GM12878 (cell line): ENCODE measurements at regions of chr12 and their contacts with region 1.

Region 1: GRCh38 chr12:52023182-52023975 is 16.6 kb downstream of the TAMALIN start:
- DNase-seq: no peak
- ATAC-seq: peak; percentile 72
- H3K4me3 ChIP-seq: peak overlapping the region; percentile 44; the same call in 1 of the 2 replicates
- H3K27ac ChIP-seq: no peak overlapping the region
- H3K4me1 ChIP-seq: peaks cover 21% of the 10 kb centered on the region
- H3K27me3 ChIP-seq: peaks cover 0 to 9% of the 10 kb centered on the region in 2 experiments; a peak in 2 of 4 replicates
- CTCF ChIP-seq: peak; percentile 91 to 97 (median 94); a peak in 5 of 6 replicates
- EP300 ChIP-seq: no peak
- POLR2A ChIP-seq: no peak
- RAD21 ChIP-seq: peak; percentile 65

Region 2: GRCh38 chr12:51579321-51579850 is 444.0 kb before region 1 on chr12:
- CTCF ChIA-PET with region 1: no interaction called
- POLR2A ChIA-PET with region 1: no interaction called
- RAD21 ChIA-PET with region 1: no interaction called
- SMC1A ChIA-PET with region 1: no interaction called
- in situ Hi-C with region 1: no loop called
- intact Hi-C with region 1: no loop called
- DNase-seq: no peak
- ATAC-seq: no peak
- H3K4me3 ChIP-seq: no peak overlapping the region
- H3K27ac ChIP-seq: no peak overlapping the region
- H3K4me1 ChIP-seq: no peaks in the 10 kb centered on the region
- H3K27me3 ChIP-seq: peaks cover 0 to 2% of the 10 kb centered on the region in 2 experiments; a peak in 2 of 4 replicates
- CTCF ChIP-seq: no peak
- EP300 ChIP-seq: no peak
- POLR2A ChIP-seq: no peak
- RAD21 ChIP-seq: no peak

Region 3: DNA sequence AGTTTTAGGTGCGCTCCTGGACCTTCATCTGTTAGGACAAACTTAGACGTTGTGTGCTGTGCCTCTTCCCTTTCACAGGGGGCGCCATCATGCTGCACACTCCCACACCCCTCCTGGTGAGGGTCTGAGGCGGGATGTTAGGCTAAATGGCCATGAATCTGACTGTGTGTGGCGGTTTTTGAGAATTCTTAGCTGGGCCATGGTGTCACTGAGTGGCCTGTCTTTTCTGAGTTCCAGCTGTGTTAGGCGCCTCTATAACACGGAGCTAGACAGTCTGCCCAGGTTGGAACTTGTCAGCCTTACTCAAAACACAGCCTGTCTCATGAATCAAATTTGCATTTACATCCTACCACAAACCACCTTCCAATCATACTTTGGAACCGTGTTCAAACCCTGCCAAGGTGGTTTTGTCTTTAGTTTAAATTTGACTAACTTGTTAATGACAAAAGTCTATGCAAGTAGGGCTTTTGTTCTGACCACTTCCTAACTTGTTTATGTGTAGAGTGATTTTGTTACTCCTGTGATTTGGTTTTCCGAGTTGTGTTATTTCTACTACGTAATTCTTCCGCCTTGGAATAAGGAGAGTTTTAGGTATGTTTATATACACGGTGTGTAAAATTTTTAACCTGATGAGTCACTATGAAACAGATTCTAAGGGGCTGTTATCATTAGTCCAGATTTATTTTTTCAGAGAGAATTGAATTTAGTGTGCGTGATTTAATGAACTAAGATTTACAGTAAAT is 52.3 kb before region 1 on chr12:
- CTCF ChIA-PET with region 1: interaction called, 12 read pairs
- POLR2A ChIA-PET with region 1: interaction called, 4 read pairs
- RAD21 ChIA-PET with region 1: interaction called, 10 read pairs
- SMC1A ChIA-PET with region 1: interaction called, 6 read pairs
- in situ Hi-C with region 1: no loop called
- intact Hi-C with region 1: no loop called
- DNase-seq: peak; percentile 93
- ATAC-seq: peak; percentile 97
- H3K4me3 ChIP-seq: no peak overlapping the region
- H3K27ac ChIP-seq: no peak overlapping the region
- H3K4me1 ChIP-seq: peaks cover 30% of the 10 kb centered on the region
- H3K27me3 ChIP-seq: peaks cover 0 to 8% of the 10 kb centered on the region in 2 experiments; a peak in 3 of 4 replicates
- CTCF ChIP-seq: peak; percentile 47 to 64 (median 60)
- EP300 ChIP-seq: peak; percentile 81 to 87; a peak in 3 of 4 replicates
- POLR2A ChIP-seq: no peak
- RAD21 ChIP-seq: 0 out of 2 replicates have a peak, but pooled peaks have one; percentile 8

Region 4: DNA sequence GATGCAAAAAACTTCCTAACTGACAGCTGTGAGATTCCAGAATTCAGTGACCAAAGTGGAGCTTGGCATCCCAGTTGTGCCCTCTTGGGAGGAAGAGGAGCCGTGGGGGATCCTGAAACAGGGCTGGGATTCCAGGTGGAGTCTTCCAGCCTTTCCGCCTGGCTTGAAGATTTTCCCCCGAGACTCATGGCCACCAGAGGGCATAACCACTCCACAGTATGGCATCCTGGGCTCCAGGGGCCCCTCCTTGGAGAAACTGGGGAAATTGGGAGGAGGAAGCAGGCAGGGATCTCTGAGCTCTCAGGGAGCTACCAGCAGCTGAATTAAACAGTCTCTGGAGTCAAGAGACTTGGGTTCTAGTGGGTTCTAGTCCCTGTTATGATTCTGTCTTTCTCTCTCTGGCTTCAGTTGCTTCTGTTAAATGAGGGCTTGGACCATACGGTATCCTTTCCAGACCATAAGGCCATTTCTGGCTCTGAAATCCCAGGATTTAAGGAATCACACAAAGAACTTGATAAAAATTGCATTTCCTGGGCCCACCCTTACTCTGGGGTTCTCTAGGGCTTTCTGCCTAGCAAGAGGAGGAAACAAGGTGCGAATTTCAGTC is 19.2 kb before region 1 on chr12:
- CTCF ChIA-PET with region 1: interaction called, 412 read pairs
- POLR2A ChIA-PET with region 1: interaction called, 4 read pairs
- RAD21 ChIA-PET with region 1: interaction called, 131 read pairs
- SMC1A ChIA-PET with region 1: interaction called, 92 read pairs
- in situ Hi-C with region 1: no loop called
- intact Hi-C with region 1: loop called (anchors 1 kb)
- DNase-seq: no peak
- ATAC-seq: no peak
- H3K4me3 ChIP-seq: no peak overlapping the region
- H3K27ac ChIP-seq: no peak overlapping the region
- H3K4me1 ChIP-seq: peaks cover 11% of the 10 kb centered on the region
- H3K27me3 ChIP-seq: peaks cover 9 to 21% of the 10 kb centered on the region in 2 experiments; a peak in 3 of 4 replicates
- CTCF ChIP-seq: peak; percentile 37 to 68 (median 59); a peak in 5 of 6 replicates
- EP300 ChIP-seq: no peak
- POLR2A ChIP-seq: no peak
- RAD21 ChIP-seq: peak; percentile 56

Region 5: GRCh38 chr12:52050761-52051541 is 27.6 kb after region 1 on chr12 and contains the start of gene NR4A1:
- CTCF ChIA-PET with region 1: interaction called, 61 read pairs
- POLR2A ChIA-PET with region 1: interaction called, 8 read pairs
- RAD21 ChIA-PET with region 1: interaction called, 29 read pairs
- SMC1A ChIA-PET with region 1: interaction called, 21 read pairs
- in situ Hi-C with region 1: no loop called
- intact Hi-C with region 1: no loop called
- DNase-seq: peak; percentile 49
- ATAC-seq: peak; percentile 85
- H3K4me3 ChIP-seq: peak within 1 kb of the TSS; percentile 76
- H3K27ac ChIP-seq: peak within 1 kb of the TSS; percentile 67
- H3K4me1 ChIP-seq: peaks cover 18% of the 10 kb centered on the region
- H3K27me3 ChIP-seq: no peaks in the 10 kb centered on the region
- CTCF ChIP-seq: peak in 2 of 3 experiments; percentile 5 to 31; a peak in 2 of 6 replicates
- EP300 ChIP-seq: peak; percentile 87 to 88
- POLR2A ChIP-seq: peak; percentile 85
- RAD21 ChIP-seq: no peak
- polyA plus RNA-seq, gene NR4A1: 0.05 TPM in 1 of 2 experiments, not detected in the other

Region 6: DNA sequence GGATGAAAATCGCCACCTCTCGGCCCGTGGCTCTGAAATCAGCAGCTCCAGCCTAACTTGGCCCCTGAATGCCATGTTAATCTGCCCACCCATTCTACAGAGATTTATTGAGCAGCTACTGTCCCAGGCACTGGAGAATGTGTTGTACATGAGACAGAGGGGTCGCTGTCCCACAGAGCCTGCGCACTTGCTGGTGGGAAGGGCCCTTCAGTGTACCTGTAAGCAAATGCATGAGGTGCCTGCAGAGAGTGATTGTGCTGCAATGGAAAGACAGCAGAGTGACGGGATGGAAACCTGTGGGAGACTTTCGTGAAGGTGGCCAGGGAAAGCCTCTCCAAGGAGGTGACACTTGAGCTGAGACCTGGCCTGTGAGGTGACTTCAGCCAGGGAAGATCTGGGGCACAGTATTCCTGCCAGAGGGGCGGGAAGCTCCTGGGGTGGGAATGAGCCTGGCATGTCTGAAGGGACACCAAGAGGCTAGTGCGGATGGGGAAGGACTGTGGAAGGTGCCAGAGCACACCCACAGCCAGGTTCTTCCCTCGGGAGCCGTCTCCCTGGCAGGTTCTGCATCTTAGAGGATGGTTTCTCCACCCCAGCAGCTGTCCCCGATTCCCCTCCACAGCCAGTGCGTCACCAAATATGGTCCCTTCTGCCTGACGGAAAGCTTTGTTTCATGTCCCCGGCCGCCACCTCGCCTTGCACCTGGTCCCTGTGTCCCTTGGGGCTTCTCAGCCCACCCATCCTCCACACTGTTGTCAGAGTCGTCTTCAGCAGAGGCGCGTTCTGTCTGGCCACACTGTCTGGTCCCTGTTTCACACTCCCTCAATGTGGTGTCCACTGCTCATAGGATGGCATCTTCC is 64.8 kb after region 1 on chr12:
- CTCF ChIA-PET with region 1: interaction called, 622 read pairs
- POLR2A ChIA-PET with region 1: interaction called, 4 read pairs
- RAD21 ChIA-PET with region 1: interaction called, 111 read pairs
- SMC1A ChIA-PET with region 1: interaction called, 322 read pairs
- in situ Hi-C with region 1: loop called (anchors 5 kb)
- intact Hi-C with region 1: loop called (anchors 1 kb)
- DNase-seq: no peak
- ATAC-seq: peak; percentile 86
- H3K4me3 ChIP-seq: no peak overlapping the region
- H3K27ac ChIP-seq: no peak overlapping the region
- H3K4me1 ChIP-seq: peaks cover 8% of the 10 kb centered on the region
- H3K27me3 ChIP-seq: no peaks in the 10 kb centered on the region; a peak in 1 of 4 replicates
- CTCF ChIP-seq: no peak
- EP300 ChIP-seq: peak in 1 of 2 experiments; percentile 36; a peak in 2 of 4 replicates
- POLR2A ChIP-seq: no peak
- RAD21 ChIP-seq: no peak

Region 7: DNA sequence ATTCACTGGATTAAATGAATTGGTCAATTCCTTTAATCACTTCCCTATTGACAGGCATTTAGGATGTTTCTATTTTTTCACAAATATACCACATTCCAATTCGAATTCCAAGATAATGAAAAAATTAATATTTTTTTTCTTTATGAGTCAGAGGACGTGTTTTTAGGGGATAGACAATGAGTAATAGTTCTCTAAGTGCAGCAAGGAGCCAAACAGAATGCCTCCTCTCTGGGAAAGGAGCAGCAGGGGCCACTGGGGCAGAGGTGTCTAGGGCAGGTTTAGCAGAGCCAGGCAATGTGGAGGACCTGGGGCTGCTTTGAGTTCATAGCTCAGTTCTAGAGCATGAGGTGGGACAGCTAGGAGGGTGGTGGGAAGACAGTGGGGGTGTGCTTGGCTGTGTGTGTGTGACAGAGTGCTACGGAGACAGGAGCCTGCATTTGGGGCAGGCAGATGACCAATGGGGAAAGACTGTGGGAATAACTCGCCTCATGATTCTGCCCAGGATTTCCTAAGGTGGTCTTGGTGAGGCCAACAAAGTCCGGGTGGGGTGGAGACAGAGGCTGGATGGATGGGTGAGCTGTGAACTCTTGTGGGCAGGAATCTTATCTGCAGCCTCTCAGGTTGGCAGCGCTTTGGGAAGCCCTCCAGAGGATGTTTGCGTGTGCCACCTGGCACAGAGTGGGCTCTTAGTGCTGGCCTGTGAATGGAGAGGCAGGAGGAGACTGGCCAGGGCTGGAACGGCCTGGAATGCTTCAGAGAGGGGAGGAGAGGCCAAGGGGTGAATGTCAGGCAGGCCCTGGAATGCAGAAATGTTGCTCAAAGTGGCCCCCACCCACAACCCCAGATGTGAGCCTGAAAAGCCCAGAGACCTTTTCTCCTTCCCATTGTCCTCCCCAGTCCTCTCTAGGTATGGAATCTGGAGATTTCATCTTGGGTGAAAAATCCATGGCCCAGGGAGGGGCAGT is 207.2 kb after region 1 on chr12:
- CTCF ChIA-PET with region 1: no interaction called
- POLR2A ChIA-PET with region 1: no interaction called
- RAD21 ChIA-PET with region 1: no interaction called
- SMC1A ChIA-PET with region 1: no interaction called
- in situ Hi-C with region 1: no loop called
- intact Hi-C with region 1: no loop called
- DNase-seq: no peak
- ATAC-seq: no peak
- H3K4me3 ChIP-seq: no peak overlapping the region
- H3K27ac ChIP-seq: no peak overlapping the region
- H3K4me1 ChIP-seq: no peaks in the 10 kb centered on the region
- H3K27me3 ChIP-seq: peaks cover 7 to 17% of the 10 kb centered on the region in 2 experiments; a peak in 3 of 4 replicates
- CTCF ChIP-seq: no peak
- EP300 ChIP-seq: no peak
- POLR2A ChIP-seq: no peak
- RAD21 ChIP-seq: no peak